ENCODE measurements at regions of chr19 and their contacts with region 1.

Region 1: DNA sequence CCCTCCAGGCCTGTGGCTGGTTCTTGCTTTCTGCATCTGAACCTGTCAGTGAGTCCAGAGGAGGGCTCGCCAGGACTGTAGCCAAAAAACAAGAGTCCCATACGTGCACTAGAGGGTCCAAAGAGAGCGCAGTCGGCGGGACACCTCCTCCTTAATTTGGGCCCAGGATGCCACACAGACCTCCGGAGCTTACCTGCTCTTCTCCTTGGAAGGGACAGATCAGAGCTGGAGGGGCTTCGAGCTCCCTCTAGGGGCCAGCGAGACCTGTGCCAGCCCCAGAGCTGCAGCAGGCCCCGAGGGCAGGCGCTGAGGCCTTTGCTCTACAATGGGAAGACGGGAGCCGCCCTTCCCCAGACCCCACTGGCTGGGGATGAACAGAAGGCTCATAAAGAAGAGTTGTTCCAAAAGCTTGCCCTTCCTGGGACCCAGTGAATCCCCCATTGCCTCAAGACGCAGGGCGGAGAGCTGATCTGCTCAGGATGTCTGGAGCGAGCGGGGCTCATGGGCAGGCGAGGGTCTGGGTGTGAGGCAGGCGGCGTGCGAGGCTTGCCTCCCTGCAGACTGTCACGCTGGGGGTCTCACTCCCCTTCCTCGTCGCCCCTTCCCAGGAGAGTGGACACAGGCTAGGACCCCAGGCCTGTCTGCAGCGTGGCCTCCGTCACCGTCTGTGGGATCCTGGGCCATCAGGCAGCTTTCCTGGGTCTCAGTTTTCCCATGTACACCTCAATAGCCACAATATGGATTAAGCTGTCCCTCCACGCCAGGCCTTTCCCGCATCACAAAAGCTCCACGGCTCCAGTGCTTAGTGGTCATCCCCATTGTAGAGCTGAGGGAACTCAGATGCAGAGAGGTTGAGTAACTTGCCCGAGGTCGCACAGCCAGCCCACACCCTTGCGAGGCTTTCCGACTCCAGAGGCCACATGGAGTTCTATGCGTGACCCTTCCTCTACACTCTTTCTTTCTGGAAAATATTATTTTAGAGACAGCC is 46.9 kb upstream of the VSTM2B start:
- H3K4me3 ChIP-seq: no peak overlapping the region
- H3K27ac ChIP-seq: no peak overlapping the region
- H3K4me1 ChIP-seq: peaks cover 4% of the 10 kb centered on the region
- CTCF ChIP-seq: peak; percentile 72; the same call in 1 of the 2 replicates

Region 2: DNA sequence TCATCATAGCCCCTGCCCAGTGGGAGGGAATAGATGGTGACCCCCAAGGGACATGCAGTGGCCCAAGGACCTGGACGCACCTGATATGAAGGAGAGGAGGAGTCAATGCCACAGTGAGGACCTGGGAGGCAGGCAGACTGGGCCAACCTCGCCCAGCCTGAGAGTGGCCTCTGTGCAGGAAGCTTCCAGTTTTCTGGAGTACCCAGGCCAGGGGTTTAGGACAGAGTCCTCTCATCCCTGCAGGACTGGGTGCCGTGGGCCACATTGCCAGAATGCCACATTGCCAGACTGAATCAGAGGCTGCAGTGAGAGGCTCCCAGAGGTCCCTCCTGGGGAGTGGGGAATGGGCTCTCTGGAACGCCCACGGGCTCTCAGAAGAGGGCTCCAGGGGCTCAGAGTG is 36.0 kb before region 1 on chr19:
- CTCF ChIA-PET with region 1: interaction called, 10 read pairs
- POLR2A ChIA-PET with region 1: no interaction called
- H3K4me3 ChIP-seq: no peak overlapping the region
- H3K27ac ChIP-seq: no peak overlapping the region
- H3K4me1 ChIP-seq: no peaks in the 10 kb centered on the region
- CTCF ChIP-seq: no peak

Region 3: DNA sequence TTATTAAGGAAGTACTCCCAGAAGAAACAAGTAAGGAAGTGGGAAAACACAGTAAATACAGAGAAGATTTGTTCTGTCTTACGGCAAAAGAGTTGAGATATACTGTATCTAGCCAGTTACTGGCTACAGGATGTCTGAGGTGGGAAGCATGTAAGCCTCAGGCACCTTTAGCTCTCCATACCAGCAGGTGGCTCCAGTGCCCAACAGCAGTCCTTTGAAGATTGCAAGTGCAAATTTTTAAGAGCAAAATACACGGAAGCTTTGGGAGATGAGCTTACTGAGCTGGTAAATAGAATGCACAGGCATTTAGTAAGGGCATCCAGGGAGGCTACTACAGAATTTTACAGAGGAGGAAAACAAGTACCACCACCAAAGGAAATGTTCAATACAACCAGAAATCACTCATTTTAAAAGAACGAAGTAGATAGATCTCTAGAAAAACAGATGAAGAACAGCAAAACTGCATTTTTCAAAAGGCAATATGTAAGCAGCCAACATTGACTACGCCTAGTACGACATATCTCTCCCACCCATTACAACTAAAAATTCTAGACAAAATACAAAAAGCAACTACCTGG is 11.0 kb before region 1 on chr19:
- CTCF ChIA-PET with region 1: interaction called, 16 read pairs
- POLR2A ChIA-PET with region 1: no interaction called
- H3K4me3 ChIP-seq: no peak overlapping the region
- H3K27ac ChIP-seq: no peak overlapping the region
- H3K4me1 ChIP-seq: 0 out of 2 replicates have a peak, but pooled peaks cover 3% of the 10 kb centered on the region
- CTCF ChIP-seq: peak; percentile 85

Region 4: GRCh38 chr19:29497686-29498436 is 19.0 kb after region 1 on chr19:
- CTCF ChIA-PET with region 1: interaction called, 19 read pairs
- POLR2A ChIA-PET with region 1: no interaction called
- H3K4me3 ChIP-seq: no peak overlapping the region
- H3K27ac ChIP-seq: no peak overlapping the region
- H3K4me1 ChIP-seq: no peaks in the 10 kb centered on the region
- CTCF ChIP-seq: no peak

Region 5: GRCh38 chr19:29520390-29520789 is 41.5 kb after region 1 on chr19:
- CTCF ChIA-PET with region 1: interaction called, 14 read pairs
- POLR2A ChIA-PET with region 1: interaction called, 3 read pairs
- H3K4me3 ChIP-seq: no peak overlapping the region
- H3K27ac ChIP-seq: no peak overlapping the region
- H3K4me1 ChIP-seq: peaks cover 6% of the 10 kb centered on the region
- CTCF ChIP-seq: no peak